Mammary epithelial cell (primary cell): ENCODE measurements at regions of chr2 and their contacts with region 1.

Region 1: GRCh38 chr2:105478670-105479069 is 79.8 kb upstream of the FHL2 start:
- DNase-seq: no peak
- H3K4me3 ChIP-seq: no peak overlapping the region
- H3K27ac ChIP-seq: no peak overlapping the region
- H3K4me1 ChIP-seq: no peaks in the 10 kb centered on the region
- H3K27me3 ChIP-seq: no peaks in the 10 kb centered on the region
- CTCF ChIP-seq: no peak

Region 2: GRCh38 chr2:105426626-105427292 is 51.9 kb before region 1 on chr2:
- CTCF ChIA-PET with region 1: no interaction called
- dilution Hi-C with region 1: loop called (anchors 5 kb)
- in situ Hi-C with region 1: no loop called
- intact Hi-C with region 1: no loop called
- DNase-seq: no peak
- H3K4me3 ChIP-seq: no peak overlapping the region
- H3K27ac ChIP-seq: no peak overlapping the region
- H3K4me1 ChIP-seq: peaks cover 10% of the 10 kb centered on the region
- H3K27me3 ChIP-seq: no peaks in the 10 kb centered on the region
- CTCF ChIP-seq: no peak

Region 3: GRCh38 chr2:105671156-105671555 is 192.5 kb after region 1 on chr2:
- CTCF ChIA-PET with region 1: no interaction called
- dilution Hi-C with region 1: no loop called
- in situ Hi-C with region 1: no loop called
- intact Hi-C with region 1: no loop called
- DNase-seq: no peak
- H3K4me3 ChIP-seq: no peak overlapping the region
- H3K27ac ChIP-seq: no peak overlapping the region
- H3K4me1 ChIP-seq: no peaks in the 10 kb centered on the region
- H3K27me3 ChIP-seq: no peaks in the 10 kb centered on the region
- CTCF ChIP-seq: no peak

Region 4: GRCh38 chr2:105858868-105859693 is 380.4 kb after region 1 on chr2:
- CTCF ChIA-PET with region 1: no interaction called
- dilution Hi-C with region 1: no loop called
- in situ Hi-C with region 1: no loop called
- intact Hi-C with region 1: no loop called
- DNase-seq: no peak
- H3K4me3 ChIP-seq: no peak overlapping the region
- H3K27ac ChIP-seq: peak overlapping the region; percentile 57
- H3K4me1 ChIP-seq: peaks cover 30% of the 10 kb centered on the region
- H3K27me3 ChIP-seq: no peaks in the 10 kb centered on the region
- CTCF ChIP-seq: no peak